Endothelial cell of umbilical vein (primary cell): ENCODE measurements at regions of chr2 and their contacts with region 1.

Region 1: GRCh38 chr2:159946326-159946999 is 116.0 kb downstream of the PLA2R1 start:
- DNase-seq: peak; percentile 94
- H3K4me3 ChIP-seq: peak overlapping the region in 1 of 3 experiments; percentile 8
- H3K27ac ChIP-seq: peak overlapping the region; percentile 98
- H3K4me1 ChIP-seq: peaks cover 41% of the 10 kb centered on the region
- H3K27me3 ChIP-seq: no peaks in the 10 kb centered on the region
- CTCF ChIP-seq: no peak
- POLR2A ChIP-seq: peak; percentile 51

Region 2: DNA sequence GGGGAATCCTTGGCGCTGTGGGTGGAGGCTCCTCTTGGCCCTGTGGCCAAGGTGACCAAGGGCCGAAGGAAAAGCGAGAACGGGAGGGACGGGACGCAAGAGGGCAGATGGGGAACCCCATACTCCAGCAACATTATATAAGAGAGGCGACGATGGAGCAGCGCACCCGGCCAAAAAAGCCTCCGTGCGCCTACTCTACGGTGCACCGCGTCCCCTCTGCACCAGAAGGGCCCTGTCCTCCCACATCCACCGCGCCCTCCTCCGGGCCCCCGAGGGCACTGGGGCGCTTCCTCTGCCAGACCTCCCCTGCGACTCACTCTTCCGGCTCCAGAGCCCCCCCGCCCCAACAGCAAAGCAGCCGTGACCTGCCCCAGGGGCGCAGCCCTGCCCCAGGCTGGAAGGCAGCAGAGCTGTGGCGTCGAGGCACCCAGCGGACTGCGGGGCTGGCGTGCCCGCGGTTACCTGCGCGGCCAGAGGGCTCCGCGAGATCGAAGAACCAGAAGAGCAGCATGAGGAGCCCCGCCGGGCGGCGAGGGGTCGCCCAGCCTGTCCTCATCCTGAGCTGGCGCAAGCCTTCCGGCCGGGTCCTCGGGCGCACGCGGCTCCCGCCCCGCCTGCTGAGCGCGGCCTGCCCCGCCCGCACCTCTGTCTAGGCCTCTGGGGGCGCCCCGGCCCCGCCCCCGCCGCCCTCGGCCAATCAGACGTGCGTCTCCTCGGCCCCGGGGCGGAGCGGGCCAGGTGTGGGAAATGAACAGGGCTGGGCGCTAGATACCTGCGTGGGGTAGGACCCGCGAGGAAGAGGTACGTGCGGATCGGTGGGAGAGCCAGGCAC is 42.1 kb before region 1 on chr2:
- CTCF ChIA-PET with region 1: no interaction called
- POLR2A ChIA-PET with region 1: no interaction called
- dilution Hi-C with region 1: no loop called
- intact Hi-C with region 1: loop called (anchors 1 kb)
- DNase-seq: peak; percentile 22
- H3K4me3 ChIP-seq: peak within 1 kb of the TSS; percentile 53 to 71 (median 58)
- H3K27ac ChIP-seq: peak within 1 kb of the TSS; percentile 68
- H3K4me1 ChIP-seq: peaks cover 22% of the 10 kb centered on the region
- H3K27me3 ChIP-seq: no peaks in the 10 kb centered on the region
- CTCF ChIP-seq: no peak
- POLR2A ChIP-seq: no peak

Region 3: GRCh38 chr2:159960383-159960782 is 13.9 kb after region 1 on chr2:
- CTCF ChIA-PET with region 1: interaction called, 9 read pairs
- POLR2A ChIA-PET with region 1: no interaction called
- dilution Hi-C with region 1: no loop called
- intact Hi-C with region 1: loop called (anchors 1 kb)
- DNase-seq: peak; percentile 84
- H3K4me3 ChIP-seq: no peak overlapping the region
- H3K27ac ChIP-seq: peak overlapping the region; percentile 64
- H3K4me1 ChIP-seq: peaks cover 29% of the 10 kb centered on the region
- H3K27me3 ChIP-seq: no peaks in the 10 kb centered on the region
- CTCF ChIP-seq: no peak
- POLR2A ChIP-seq: no peak

Region 4: DNA sequence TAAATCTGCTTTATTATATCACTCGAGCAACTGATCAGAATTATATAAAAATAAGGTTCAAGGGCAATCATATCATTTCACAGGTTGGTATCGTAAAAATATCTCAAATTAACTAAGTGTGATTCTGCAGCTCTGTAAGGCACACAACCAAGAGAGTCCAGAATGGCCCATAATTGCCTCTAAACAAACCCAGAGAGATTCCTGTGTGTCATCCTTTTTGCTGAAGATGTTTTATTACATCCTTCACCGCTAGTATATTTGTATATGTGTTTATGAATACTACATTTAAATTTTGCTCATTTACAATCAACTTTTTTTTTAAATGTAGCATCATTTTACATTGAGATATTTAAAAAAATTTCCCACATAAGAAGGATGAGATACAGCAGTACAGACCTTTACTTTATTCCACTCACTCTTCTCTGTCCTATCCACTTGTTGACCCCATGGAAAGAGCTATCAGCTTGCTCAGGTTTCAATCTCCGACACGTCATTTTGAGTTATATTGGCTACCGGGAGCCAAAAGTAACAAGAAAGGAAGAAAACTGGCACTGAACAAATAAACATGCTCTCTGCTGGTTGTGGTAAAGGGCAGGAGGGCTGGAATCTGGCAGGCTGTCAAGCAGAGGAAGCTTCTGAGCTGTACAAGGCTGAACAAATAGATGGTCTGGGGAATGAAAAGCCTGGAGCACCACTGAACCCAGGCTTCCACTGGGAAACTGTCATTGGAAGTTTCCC is 92.9 kb after region 1 on chr2:
- CTCF ChIA-PET with region 1: no interaction called
- POLR2A ChIA-PET with region 1: no interaction called
- dilution Hi-C with region 1: no loop called
- intact Hi-C with region 1: no loop called
- DNase-seq: peak; percentile 100
- H3K4me3 ChIP-seq: no peak overlapping the region
- H3K27ac ChIP-seq: peak overlapping the region; percentile 39
- H3K4me1 ChIP-seq: peaks cover 53% of the 10 kb centered on the region
- H3K27me3 ChIP-seq: no peaks in the 10 kb centered on the region
- CTCF ChIP-seq: no peak
- POLR2A ChIP-seq: peak; percentile 80